ENCODE measurements at regions of chr3 and their contacts with region 1.

Region 1: DNA sequence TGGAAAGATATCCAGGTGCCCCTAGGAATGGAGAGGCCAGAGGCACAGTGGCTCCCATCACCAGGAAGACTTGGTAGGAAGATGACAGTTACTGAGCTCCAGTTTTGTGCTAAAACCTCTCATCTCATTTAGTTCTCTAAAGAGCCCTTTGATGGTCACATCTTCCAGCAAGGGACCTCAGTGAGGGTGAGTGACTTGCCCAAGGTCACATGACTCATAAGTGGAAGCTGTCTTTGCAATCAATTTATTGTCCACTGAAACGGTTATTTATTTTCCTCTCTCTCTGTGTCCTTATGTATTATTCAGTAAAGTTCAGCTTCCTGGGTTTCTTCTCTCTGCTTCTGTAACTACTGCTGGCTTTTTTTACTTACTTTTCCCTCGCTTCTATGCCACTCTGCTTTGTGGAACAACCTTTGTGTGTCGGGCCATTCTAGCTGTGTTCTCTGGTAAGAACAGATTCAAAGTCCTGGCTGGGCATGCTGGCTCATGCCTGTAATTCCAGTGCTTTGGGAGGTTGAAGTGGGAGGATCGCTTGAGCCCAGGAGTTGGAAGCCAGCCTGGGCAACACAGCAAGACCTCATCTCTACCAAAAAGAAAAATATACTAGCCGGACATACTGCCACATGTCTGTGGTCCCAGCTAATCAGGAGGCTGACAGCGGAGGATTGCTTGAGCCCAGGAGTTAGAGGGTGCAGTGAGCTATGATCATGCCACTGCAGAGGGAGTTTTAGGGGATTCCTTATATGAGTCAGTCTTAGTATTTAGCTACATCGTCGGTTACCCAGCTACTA is 55.9 kb downstream of the PDIA5 start:
- DNase-seq: no peak
- H3K4me3 ChIP-seq: no peak overlapping the region
- H3K27ac ChIP-seq: no peak overlapping the region
- H3K4me1 ChIP-seq: no peaks in the 10 kb centered on the region
- CTCF ChIP-seq: no peak

Region 2: DNA sequence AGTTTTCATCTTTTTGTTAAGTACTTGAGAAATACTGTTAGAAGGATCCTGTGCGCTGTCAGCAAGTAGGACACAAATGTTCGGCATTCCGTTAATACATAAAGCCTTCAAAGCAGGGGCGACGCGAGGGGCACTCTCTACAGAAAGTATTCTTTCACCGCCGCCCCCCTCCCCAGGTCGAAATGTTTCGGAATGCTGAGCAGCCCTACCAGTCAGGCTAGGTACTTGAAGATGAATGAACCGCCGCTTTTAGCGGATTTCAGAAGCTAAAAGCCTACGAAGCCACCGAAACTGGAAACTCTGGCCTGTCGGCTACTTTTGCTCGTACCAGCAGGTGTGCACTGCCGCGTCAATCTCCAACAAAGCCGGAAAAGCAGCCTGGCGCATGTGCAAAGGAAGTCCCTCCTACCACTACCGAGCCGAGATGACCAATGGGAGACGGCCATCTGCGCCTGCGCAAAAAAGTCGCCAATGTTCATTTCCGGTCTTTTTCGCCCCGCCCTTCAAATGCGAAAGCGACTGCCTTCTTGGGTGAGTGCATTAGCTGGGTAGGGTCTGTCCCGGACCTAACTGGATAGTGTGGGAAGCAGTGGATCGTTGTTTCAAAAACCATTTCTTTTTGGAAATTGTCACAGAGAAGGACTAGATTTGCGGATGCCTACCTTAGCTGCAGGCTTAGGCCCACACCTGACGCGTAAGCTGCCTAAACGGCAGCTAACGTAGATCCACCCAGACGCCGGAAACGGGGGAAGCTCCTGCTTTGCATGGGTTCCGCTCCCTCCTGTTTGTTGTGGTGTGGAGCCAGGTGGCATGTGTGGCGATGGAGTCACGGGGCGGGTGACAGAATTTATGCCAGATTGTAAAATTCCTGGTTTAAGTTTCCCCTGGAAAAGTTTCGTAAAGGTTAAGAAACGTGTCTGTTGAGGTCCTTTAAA is 706.7 kb before region 1 on chr3 and contains the start of gene WDR5B:
- CTCF ChIA-PET with region 1: no interaction called
- POLR2A ChIA-PET with region 1: no interaction called
- intact Hi-C with region 1: no loop called
- DNase-seq: peak; percentile 98
- H3K4me3 ChIP-seq: peak within 1 kb of the TSS; percentile 85
- H3K27ac ChIP-seq: peak within 1 kb of the TSS; percentile 87
- H3K4me1 ChIP-seq: peaks cover 38% of the 10 kb centered on the region
- CTCF ChIP-seq: 0 out of 2 replicates have a peak, but pooled peaks have one; percentile 13
- total RNA-seq, gene WDR5B: 6.9 and 8.3 TPM in 2 replicates

Region 3: GRCh38 chr3:123110243-123110975 is 12.3 kb before region 1 on chr3:
- CTCF ChIA-PET with region 1: interaction called, 10 read pairs
- POLR2A ChIA-PET with region 1: interaction called, 4 read pairs
- intact Hi-C with region 1: no loop called
- DNase-seq: no peak
- H3K4me3 ChIP-seq: no peak overlapping the region
- H3K27ac ChIP-seq: no peak overlapping the region
- H3K4me1 ChIP-seq: peaks cover 15% of the 10 kb centered on the region
- CTCF ChIP-seq: no peak

Region 4: GRCh38 chr3:123297627-123297899 is 174.8 kb after region 1 on chr3:
- CTCF ChIA-PET with region 1: no interaction called
- POLR2A ChIA-PET with region 1: no interaction called
- intact Hi-C with region 1: no loop called
- DNase-seq: no peak
- H3K4me3 ChIP-seq: no peak overlapping the region
- H3K27ac ChIP-seq: no peak overlapping the region
- H3K4me1 ChIP-seq: peaks cover 10% of the 10 kb centered on the region
- CTCF ChIP-seq: peak; percentile 41; the same call in 1 of the 2 replicates

Measured in OCI-LY7 (cell line).